Gastrocnemius medialis (tissue), 4 donors: ENCODE measurements at regions of chr7 and their contacts with region 1.

Region 1: GRCh38 chr7:66493235-66494181 is 135.2 kb upstream of the KCTD7 start:
- DNase-seq: peak; percentile 97 to 98
- ATAC-seq: peak; percentile 95 to 97
- H3K4me3 ChIP-seq: peak overlapping the region; percentile 78 to 95 (median 88)
- H3K27ac ChIP-seq: peak overlapping the region; percentile 87 to 95 (median 92)
- H3K4me1 ChIP-seq: peaks cover 5 to 10% of the 10 kb centered on the region in 2 donors
- H3K27me3 ChIP-seq: no peaks in the 10 kb centered on the region
- CTCF ChIP-seq: peak in 4 of 5 experiments; percentile 10 to 55 (median 38)
- POLR2A ChIP-seq: peak; percentile 91 to 94

Region 2: DNA sequence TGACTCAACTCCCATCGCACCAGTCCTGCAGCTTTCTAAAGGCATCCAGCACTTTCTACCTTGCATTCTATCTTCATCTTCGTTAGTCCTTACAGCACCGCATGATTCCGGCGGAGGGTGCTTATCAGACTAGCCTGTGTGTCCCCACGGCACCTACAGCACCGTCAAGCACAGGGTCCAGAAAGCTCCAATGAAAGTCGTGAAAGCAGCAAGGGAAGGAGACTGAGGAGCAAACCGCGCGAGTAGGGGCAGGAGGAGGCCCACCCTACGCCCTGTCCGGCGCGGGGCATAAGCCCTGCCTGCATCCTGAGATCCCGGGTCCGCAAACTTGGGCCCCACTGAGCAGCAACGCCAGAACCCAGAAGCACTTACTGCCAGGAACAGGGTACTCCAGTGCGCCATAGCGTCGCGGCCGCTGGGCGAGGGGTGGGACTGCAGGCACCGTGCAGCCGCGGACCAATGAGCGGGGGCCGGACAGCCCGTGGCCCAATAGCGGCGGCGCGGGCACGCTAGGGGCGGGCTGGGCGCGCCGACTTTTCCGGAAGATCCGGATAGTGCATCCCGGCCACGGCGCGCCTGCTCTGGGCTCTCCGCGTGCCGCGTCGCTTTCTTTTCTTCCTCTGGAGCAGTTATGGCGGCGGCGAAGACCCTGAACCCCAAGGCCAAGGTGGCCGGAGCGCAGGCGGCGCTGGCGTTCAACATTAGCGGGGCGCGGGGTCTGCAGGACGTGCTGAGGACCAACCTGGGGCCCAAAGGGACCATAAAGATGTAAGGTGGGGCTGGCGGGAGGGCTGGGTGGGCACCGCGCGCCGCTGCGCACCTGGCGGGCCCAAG is 742.8 kb before region 1 on chr7:
- in situ Hi-C with region 1: loop called in 1 of 4 experiments (anchors 25 kb)
- intact Hi-C with region 1: loop called (anchors 5 kb)
- DNase-seq: peak; percentile 78 to 81
- ATAC-seq: peak; percentile 93 to 95
- H3K4me3 ChIP-seq: peak overlapping the region; percentile 94 to 98 (median 96)
- H3K27ac ChIP-seq: peak overlapping the region; percentile 80 to 86 (median 82)
- H3K4me1 ChIP-seq: peaks cover 12 to 13% of the 10 kb centered on the region in 2 donors
- H3K27me3 ChIP-seq: no peaks in the 10 kb centered on the region
- CTCF ChIP-seq: peak in 3 of 5 experiments; percentile 27 to 42 (median 39)
- POLR2A ChIP-seq: peak; percentile 31 to 52

Region 3: DNA sequence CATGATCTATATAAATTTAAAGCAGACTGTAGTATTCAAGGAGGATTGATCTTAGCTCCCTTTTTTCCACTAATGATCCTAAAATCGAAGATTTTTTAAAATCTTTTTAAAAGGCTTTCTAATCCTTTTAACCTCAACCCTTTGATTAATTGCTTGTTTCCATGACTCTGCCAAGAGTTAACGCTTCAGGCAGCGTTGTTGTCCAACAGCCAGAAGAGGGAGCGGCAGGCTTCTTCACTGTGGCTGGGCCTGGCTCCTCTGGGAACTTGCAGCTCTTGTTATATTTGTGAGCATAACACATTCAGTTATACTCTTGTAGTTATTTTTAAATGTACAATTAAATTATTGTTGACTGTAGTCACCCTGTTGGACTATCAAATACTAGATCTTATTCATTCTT is 352.6 kb before region 1 on chr7:
- in situ Hi-C with region 1: no loop called
- intact Hi-C with region 1: loop called (anchors 10 kb)
- DNase-seq: peak; percentile 23 to 32
- ATAC-seq: no peak
- H3K4me3 ChIP-seq: no peak overlapping the region
- H3K27ac ChIP-seq: peak overlapping the region in 1 of 4 donors; percentile 39
- H3K4me1 ChIP-seq: peaks cover 10 to 17% of the 10 kb centered on the region in 2 donors
- H3K27me3 ChIP-seq: no peaks in the 10 kb centered on the region
- CTCF ChIP-seq: peak; percentile 11 to 51 (median 21)
- POLR2A ChIP-seq: no peak

Region 4: DNA sequence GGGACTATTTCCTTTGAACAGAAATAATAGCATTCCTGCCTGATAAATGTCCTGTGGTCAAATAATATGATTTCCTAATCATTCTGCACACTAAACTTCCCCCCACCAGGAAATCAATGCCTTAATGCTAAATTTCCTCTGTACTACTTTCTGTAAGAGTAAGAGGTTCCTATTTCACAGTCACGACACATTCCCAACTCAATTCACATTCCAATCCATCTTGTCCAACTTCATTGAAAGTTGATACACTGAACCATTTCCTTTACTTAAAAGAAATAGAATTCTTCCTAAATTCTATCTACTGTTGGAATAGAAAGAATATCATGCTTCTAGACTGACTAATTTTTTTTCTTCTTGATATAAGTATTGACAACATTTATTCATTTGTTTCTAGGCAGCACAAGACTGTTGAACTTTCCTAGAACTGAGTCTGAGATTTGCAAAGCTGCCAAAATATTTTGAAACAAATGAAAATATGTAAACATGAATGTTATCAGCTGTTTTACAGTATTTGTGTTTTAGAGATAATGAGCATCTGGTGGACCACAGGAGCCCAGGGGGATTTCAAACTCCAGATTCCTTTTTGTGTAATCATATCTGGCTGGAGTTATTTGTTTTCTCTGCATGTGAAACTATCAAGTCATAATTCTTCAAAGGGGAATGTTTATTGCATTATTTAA is 166.9 kb before region 1 on chr7:
- in situ Hi-C with region 1: no loop called
- intact Hi-C with region 1: no loop called
- DNase-seq: no peak
- ATAC-seq: peak in 1 of 2 donors; percentile 47
- H3K4me3 ChIP-seq: no peak overlapping the region
- H3K27ac ChIP-seq: no peak overlapping the region
- H3K4me1 ChIP-seq: peaks cover 3 to 10% of the 10 kb centered on the region in 2 donors
- H3K27me3 ChIP-seq: no peaks in the 10 kb centered on the region
- CTCF ChIP-seq: no peak
- POLR2A ChIP-seq: no peak

Region 5: GRCh38 chr7:66654123-66654732 is 160.7 kb after region 1 on chr7:
- in situ Hi-C with region 1: no loop called
- intact Hi-C with region 1: loop called (anchors 10 kb)
- DNase-seq: peak; percentile 95 to 97
- ATAC-seq: peak; percentile 97
- H3K4me3 ChIP-seq: peak overlapping the region; percentile 81 to 99 (median 87)
- H3K27ac ChIP-seq: peak overlapping the region; percentile 89 to 100 (median 99)
- H3K4me1 ChIP-seq: peaks cover 11 to 13% of the 10 kb centered on the region in 2 donors
- H3K27me3 ChIP-seq: no peaks in the 10 kb centered on the region
- CTCF ChIP-seq: peak in 2 of 5 experiments; percentile 3 to 32
- POLR2A ChIP-seq: peak; percentile 97 to 99

Region 6: DNA sequence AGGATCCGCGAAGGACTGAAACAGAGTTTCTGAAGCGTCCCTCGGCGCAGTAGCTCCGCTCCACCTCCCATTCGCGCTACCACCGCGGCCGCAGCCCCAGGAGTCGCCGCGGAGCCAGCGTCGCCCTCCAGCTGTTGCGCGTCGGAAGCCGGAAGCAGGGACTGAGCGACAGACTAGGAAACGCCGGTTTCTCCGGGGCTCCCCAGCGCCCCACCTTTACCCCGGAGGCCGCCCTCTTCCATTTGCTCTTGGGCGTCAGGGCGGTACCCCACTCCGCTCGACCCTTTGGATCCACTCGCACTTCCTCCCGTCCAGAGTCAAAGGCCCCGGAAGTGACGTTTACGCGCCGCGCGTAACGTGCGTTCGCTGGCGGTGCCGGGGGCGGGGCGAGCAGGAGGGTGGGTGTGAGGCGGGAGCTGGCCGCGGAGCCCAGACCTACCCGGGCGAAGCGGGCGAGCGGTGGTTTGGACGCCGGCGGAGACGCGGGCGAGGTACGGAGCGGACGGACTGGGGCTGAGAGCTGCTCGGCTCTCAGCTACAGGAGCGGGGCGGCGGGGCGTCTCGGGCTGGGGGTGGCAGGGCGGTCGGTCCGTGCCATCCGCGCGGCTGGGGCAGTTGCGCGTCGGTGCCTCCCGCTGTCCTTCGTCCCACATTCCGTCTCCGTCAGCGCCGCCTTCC is 246.9 kb after region 1 on chr7 and contains the start of gene RABGEF1:
- in situ Hi-C with region 1: no loop called
- intact Hi-C with region 1: loop called (anchors 5 kb)
- DNase-seq: peak; percentile 95 to 96
- ATAC-seq: peak; percentile 91 to 92
- H3K4me3 ChIP-seq: peak within 1 kb of the TSS; percentile 82 to 100 (median 98)
- H3K27ac ChIP-seq: peak within 1 kb of the TSS; percentile 97 to 99 (median 98)
- H3K4me1 ChIP-seq: peaks cover 15 to 16% of the 10 kb centered on the region in 2 donors
- H3K27me3 ChIP-seq: no peaks in the 10 kb centered on the region
- CTCF ChIP-seq: peak in 1 of 5 experiments; percentile 16
- POLR2A ChIP-seq: peak; percentile 91 to 96
- total RNA-seq, gene RABGEF1: 18.8 to 29.7 (median 24.9) TPM

Region 7: GRCh38 chr7:67006971-67007370 is 513.5 kb after region 1 on chr7:
- in situ Hi-C with region 1: no loop called
- intact Hi-C with region 1: no loop called
- DNase-seq: no peak
- ATAC-seq: no peak
- H3K4me3 ChIP-seq: no peak overlapping the region
- H3K27ac ChIP-seq: no peak overlapping the region
- H3K4me1 ChIP-seq: peaks cover 0 to 3% of the 10 kb centered on the region in 2 donors
- H3K27me3 ChIP-seq: no peaks in the 10 kb centered on the region
- CTCF ChIP-seq: no peak
- POLR2A ChIP-seq: no peak